A673 (cell line): ENCODE measurements at regions of chr7 and their contacts with region 1.

Region 1: GRCh38 chr7:117385340-117386109 is 41.8 kb downstream of the ASZ1 start:
- DNase-seq: peak; percentile 52
- H3K4me3 ChIP-seq: no peak overlapping the region
- H3K27ac ChIP-seq: no peak overlapping the region
- H3K4me1 ChIP-seq: no peaks in the 10 kb centered on the region
- H3K27me3 ChIP-seq: no peaks in the 10 kb centered on the region
- CTCF ChIP-seq: peak; percentile 60

Region 2: DNA sequence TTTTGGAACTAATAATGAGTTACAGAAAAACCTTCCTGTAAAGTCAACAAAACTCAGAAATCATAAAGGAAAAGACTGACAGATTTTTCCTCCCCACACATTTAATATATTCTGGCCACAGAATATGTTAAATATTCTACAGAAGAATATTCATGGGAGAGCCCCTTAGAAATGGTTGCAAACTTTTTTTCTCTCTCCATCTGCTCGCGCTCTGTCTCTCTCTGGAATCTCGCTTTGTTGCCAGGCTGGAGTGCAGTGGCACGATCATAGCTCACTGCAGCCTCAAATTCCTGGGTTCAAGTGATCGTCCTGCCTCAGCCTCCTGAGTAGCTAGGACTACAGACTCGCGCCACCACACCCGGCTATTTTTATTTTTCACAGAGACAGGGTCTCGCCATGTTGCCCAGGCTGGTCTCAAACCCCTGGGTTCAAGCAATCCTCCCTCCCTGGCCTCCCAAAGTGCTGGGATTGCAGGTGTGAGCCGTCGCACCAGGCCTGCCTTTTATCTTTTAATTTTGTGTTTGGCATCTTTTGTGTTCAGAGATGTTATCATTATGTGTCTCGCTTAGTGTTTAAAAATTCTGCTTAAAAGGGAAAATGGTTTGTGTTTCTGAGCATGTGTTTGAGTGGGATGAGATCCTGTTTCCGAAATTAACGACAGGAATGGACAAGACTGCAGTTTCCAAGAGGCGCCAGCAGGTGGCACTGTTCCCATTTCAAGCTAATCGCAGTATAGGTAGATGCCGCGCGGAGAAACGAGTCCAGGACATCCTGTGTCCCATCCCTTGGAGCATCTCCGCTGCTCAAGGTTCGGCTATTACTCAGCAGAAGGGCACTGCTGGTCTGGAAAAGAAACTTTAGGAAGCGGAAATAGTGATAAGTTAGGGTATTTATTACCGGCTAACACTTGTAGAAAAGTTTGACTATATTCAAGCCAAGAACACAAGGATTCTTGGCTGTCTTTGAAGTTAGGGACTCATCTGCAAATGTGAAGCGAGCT is 455.3 kb before region 1 on chr7:
- CTCF ChIA-PET with region 1: no interaction called
- POLR2A ChIA-PET with region 1: no interaction called
- intact Hi-C with region 1: loop called (anchors 5 kb)
- DNase-seq: peak; percentile 88
- H3K4me3 ChIP-seq: no peak overlapping the region
- H3K27ac ChIP-seq: no peak overlapping the region
- H3K4me1 ChIP-seq: no peaks in the 10 kb centered on the region
- H3K27me3 ChIP-seq: no peaks in the 10 kb centered on the region
- CTCF ChIP-seq: peak; percentile 93

Region 3: GRCh38 chr7:117212969-117213877 is 172.3 kb before region 1 on chr7:
- CTCF ChIA-PET with region 1: interaction called, 3 read pairs
- POLR2A ChIA-PET with region 1: no interaction called
- intact Hi-C with region 1: loop called (anchors 5 kb)
- DNase-seq: peak; percentile 72
- H3K4me3 ChIP-seq: no peak overlapping the region
- H3K27ac ChIP-seq: no peak overlapping the region
- H3K4me1 ChIP-seq: peaks cover 7% of the 10 kb centered on the region
- H3K27me3 ChIP-seq: no peaks in the 10 kb centered on the region
- CTCF ChIP-seq: peak; percentile 91

Region 4: DNA sequence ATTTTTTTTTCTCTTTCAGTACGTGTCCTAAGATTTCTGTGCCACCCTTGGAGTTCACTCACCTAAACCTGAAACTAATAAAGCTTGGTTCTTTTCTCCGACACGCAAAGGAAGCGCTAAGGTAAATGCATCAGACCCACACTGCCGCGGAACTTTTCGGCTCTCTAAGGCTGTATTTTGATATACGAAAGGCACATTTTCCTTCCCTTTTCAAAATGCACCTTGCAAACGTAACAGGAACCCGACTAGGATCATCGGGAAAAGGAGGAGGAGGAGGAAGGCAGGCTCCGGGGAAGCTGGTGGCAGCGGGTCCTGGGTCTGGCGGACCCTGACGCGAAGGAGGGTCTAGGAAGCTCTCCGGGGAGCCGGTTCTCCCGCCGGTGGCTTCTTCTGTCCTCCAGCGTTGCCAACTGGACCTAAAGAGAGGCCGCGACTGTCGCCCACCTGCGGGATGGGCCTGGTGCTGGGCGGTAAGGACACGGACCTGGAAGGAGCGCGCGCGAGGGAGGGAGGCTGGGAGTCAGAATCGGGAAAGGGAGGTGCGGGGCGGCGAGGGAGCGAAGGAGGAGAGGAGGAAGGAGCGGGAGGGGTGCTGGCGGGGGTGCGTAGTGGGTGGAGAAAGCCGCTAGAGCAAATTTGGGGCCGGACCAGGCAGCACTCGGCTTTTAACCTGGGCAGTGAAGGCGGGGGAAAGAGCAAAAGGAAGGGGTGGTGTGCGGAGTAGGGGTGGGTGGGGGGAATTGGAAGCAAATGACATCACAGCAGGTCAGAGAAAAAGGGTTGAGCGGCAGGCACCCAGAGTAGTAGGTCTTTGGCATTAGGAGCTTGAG is 93.9 kb after region 1 on chr7 and contains the start of gene CFTR:
- CTCF ChIA-PET with region 1: no interaction called
- POLR2A ChIA-PET with region 1: no interaction called
- intact Hi-C with region 1: no loop called
- DNase-seq: no peak
- H3K4me3 ChIP-seq: no peak within 1 kb of the TSS
- H3K27ac ChIP-seq: no peak within 1 kb of the TSS
- H3K4me1 ChIP-seq: no peaks in the 10 kb centered on the region
- H3K27me3 ChIP-seq: peaks cover 25% of the 10 kb centered on the region
- CTCF ChIP-seq: no peak
- total RNA-seq, gene CFTR: 0.19 and 0.37 TPM in 2 replicates